Endothelial cell of umbilical vein (primary cell): ENCODE measurements at regions of chrX and their contacts with region 1.

Region 1: GRCh38 chrX:130916636-130917422 is 13.8 kb upstream of the ENOX2 start:
- DNase-seq: peak; percentile 38
- H3K4me3 ChIP-seq: no peak overlapping the region
- H3K27ac ChIP-seq: no peak overlapping the region
- H3K4me1 ChIP-seq: no peaks in the 10 kb centered on the region
- H3K27me3 ChIP-seq: peaks cover 0 to 2% of the 10 kb centered on the region in 2 experiments
- CTCF ChIP-seq: peak; percentile 44 to 54
- POLR2A ChIP-seq: no peak

Region 2: GRCh38 chrX:130330706-130331105 is 586.1 kb before region 1 on chrX:
- CTCF ChIA-PET with region 1: interaction called, 12 read pairs
- POLR2A ChIA-PET with region 1: no interaction called
- dilution Hi-C with region 1: no loop called
- intact Hi-C with region 1: loop called (anchors 1 kb)
- DNase-seq: peak; percentile 35
- H3K4me3 ChIP-seq: no peak overlapping the region
- H3K27ac ChIP-seq: no peak overlapping the region
- H3K4me1 ChIP-seq: no peaks in the 10 kb centered on the region
- H3K27me3 ChIP-seq: no peaks in the 10 kb centered on the region
- CTCF ChIP-seq: peak; percentile 33 to 34
- POLR2A ChIP-seq: no peak

Region 3: DNA sequence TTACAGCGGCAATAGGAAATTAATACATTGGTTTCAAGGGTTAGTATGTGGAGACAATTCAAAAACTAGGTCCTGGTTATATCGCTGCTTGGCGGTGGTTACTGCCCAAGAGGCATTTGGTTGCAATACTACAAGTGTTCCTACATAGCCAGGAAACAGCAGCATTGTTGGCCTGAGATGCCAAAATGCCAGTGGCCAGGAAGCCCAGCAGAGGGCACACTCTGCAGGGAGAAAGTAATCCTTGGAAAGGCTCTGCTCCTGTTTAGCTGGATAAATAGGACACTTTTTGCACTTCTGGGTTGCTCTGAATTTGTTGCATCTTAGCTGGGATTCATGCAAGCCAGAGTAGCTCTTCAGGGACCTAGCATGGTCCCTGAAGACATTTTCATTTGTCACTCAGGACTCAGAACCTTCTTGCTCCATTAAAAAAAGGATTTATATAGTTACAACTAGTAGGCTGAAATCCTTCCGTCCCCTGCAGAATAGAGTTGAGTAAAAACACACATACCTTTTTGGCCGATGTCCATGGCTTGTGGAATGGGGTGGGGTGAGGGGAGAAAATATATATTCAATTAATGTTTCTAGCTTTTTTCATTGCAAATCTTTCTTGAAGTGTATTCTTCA is 523.3 kb before region 1 on chrX:
- CTCF ChIA-PET with region 1: interaction called, 41 read pairs
- POLR2A ChIA-PET with region 1: no interaction called
- dilution Hi-C with region 1: no loop called
- intact Hi-C with region 1: loop called (anchors 1 kb)
- DNase-seq: peak; percentile 50
- H3K4me3 ChIP-seq: no peak overlapping the region
- H3K27ac ChIP-seq: no peak overlapping the region
- H3K4me1 ChIP-seq: no peaks in the 10 kb centered on the region
- H3K27me3 ChIP-seq: peaks cover 0 to 5% of the 10 kb centered on the region in 2 experiments
- CTCF ChIP-seq: peak; percentile 45 to 63
- POLR2A ChIP-seq: no peak

Region 4: GRCh38 chrX:130575831-130576389 is 340.9 kb before region 1 on chrX:
- CTCF ChIA-PET with region 1: interaction called, 184 read pairs
- POLR2A ChIA-PET with region 1: no interaction called
- dilution Hi-C with region 1: no loop called
- intact Hi-C with region 1: loop called (anchors 2 kb)
- DNase-seq: peak; percentile 35
- H3K4me3 ChIP-seq: no peak overlapping the region
- H3K27ac ChIP-seq: no peak overlapping the region
- H3K4me1 ChIP-seq: no peaks in the 10 kb centered on the region
- H3K27me3 ChIP-seq: no peaks in the 10 kb centered on the region
- CTCF ChIP-seq: peak; percentile 36 to 76
- POLR2A ChIP-seq: no peak

Region 5: GRCh38 chrX:130793966-130794365 is 122.9 kb before region 1 on chrX:
- CTCF ChIA-PET with region 1: no interaction called
- POLR2A ChIA-PET with region 1: no interaction called
- dilution Hi-C with region 1: no loop called
- intact Hi-C with region 1: no loop called
- DNase-seq: peak; percentile 2
- H3K4me3 ChIP-seq: no peak overlapping the region
- H3K27ac ChIP-seq: no peak overlapping the region
- H3K4me1 ChIP-seq: peaks cover 3% of the 10 kb centered on the region
- H3K27me3 ChIP-seq: no peaks in the 10 kb centered on the region
- CTCF ChIP-seq: no peak
- POLR2A ChIP-seq: no peak